ENCODE measurements at regions of chr1 and their contacts with region 1.

Region 1: DNA sequence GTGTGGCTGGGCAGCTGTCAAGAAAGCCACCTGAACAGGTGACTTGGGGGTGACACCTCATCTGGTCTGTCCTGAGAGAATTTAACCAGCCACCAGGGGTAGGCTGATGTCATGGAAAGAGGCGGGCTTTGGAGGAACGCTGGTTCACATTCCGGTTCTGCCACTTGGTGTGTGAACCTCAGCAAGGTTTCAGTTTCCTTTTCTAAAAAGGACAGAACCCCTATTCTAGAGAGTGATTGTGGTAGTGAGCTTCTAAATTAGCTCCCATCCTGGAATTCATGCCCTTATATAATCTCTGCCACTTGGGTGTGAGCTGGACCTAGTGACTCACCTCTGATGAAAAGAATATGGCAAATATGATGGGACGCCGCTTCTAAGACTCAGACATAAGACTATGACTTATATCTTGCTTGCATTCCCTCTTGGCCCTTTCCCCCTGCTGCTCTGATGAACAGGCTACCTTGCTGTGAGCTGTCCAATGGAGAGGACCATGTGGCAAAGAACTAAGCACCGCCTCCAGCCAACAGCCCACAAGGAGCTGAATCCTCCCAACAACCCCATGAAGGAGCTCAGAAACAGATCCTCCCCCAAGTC is 332.1 kb downstream of the RRAGC start:
- DNase-seq: peak in 5 of 9 experiments; percentile 29 to 66 (median 53)
- ATAC-seq: peak; percentile 61
- H3K4me3 ChIP-seq: no peak overlapping the region
- H3K4me3 Mint-ChIP-seq: peak overlapping the region; percentile 58
- H3K27ac ChIP-seq: no peak overlapping the region
- H3K27ac Mint-ChIP-seq: peak overlapping the region; percentile 50
- H3K4me1 ChIP-seq: no peaks in the 10 kb centered on the region
- H3K4me1 Mint-ChIP-seq: peaks cover 13% of the 10 kb centered on the region
- H3K27me3 ChIP-seq: no peaks in the 10 kb centered on the region
- H3K27me3 Mint-ChIP-seq: peaks cover 18% of the 10 kb centered on the region
- CTCF ChIP-seq: no peak

Region 2: DNA sequence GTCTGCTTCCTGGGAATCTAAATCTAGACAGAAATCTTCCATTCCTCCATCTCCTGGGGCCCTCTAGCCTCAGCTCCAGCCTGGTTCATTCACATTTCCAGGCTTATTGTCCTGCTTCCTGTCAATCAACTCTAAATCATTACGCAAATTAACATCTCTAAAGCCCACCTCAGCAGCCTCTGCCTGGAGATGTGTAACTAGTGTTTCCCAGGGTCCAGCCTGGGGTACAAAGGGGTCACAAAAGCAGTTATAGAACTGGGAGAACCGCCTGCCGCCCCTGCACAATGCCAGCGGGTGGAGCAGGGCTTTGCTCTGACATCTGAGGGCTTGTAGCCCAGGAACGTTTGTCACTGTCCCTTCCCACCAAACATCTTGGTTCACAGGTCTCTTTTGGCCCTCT is 41.4 kb before region 1 on chr1:
- CTCF ChIA-PET with region 1: no interaction called
- POLR2A ChIA-PET with region 1: no interaction called
- intact Hi-C with region 1: no loop called
- DNase-seq: peak in 1 of 9 experiments; percentile 7
- ATAC-seq: no peak
- H3K4me3 ChIP-seq: no peak overlapping the region
- H3K4me3 Mint-ChIP-seq: no peak overlapping the region
- H3K27ac ChIP-seq: no peak overlapping the region
- H3K27ac Mint-ChIP-seq: no peak overlapping the region
- H3K4me1 ChIP-seq: no peaks in the 10 kb centered on the region
- H3K4me1 Mint-ChIP-seq: no peaks in the 10 kb centered on the region
- H3K27me3 ChIP-seq: peaks cover 0 to 3% of the 10 kb centered on the region in 2 experiments
- H3K27me3 Mint-ChIP-seq: peaks cover 40% of the 10 kb centered on the region
- CTCF ChIP-seq: no peak

Region 3: DNA sequence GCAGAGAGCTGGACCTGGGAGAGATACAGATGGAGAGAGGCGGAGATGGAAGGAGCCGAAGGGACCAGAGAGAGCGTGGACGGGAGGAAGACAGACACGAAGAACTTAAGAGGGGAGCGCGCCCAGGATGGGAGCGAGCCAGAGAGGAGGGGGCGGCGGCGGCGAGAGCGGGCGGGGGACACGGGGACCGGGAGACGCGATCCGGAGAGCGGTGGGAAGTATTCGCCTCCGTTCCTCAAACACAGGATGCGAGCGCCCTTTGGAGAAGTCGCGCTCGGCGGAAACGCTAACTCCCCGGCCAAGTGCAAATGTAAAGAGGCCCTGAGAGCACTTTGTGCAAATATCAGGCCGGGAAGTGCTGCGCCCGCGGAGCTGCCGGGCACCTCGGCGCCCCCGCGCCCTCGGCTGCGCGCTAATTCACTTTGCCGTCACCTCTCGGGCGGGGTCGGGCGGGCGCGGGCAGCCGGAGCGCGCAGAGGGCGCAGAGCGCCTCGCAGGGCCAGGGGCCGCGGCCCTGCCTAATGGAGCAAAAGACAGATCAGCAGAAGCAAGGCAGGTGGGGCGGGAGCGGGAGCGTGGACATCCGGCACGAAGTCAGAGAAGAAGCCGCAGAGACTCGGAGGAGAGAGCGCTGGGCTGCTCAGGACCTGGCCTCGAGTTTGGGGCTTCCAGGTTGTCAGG is 50.9 kb after region 1 on chr1:
- CTCF ChIA-PET with region 1: no interaction called
- POLR2A ChIA-PET with region 1: no interaction called
- intact Hi-C with region 1: loop called (anchors 5 to 10 kb)
- DNase-seq: peak in 1 of 9 experiments; percentile 49
- ATAC-seq: no peak
- H3K4me3 ChIP-seq: no peak overlapping the region
- H3K4me3 Mint-ChIP-seq: peak overlapping the region; percentile 58
- H3K27ac ChIP-seq: no peak overlapping the region
- H3K27ac Mint-ChIP-seq: no peak overlapping the region
- H3K4me1 ChIP-seq: peaks cover 4% of the 10 kb centered on the region
- H3K4me1 Mint-ChIP-seq: peaks cover 10% of the 10 kb centered on the region
- H3K27me3 ChIP-seq: peaks cover 6 to 9% of the 10 kb centered on the region in 2 experiments
- H3K27me3 Mint-ChIP-seq: peaks cover 55% of the 10 kb centered on the region
- CTCF ChIP-seq: no peak